ENCODE measurements at regions of chr10 and their contacts with region 1.

Region 1: DNA sequence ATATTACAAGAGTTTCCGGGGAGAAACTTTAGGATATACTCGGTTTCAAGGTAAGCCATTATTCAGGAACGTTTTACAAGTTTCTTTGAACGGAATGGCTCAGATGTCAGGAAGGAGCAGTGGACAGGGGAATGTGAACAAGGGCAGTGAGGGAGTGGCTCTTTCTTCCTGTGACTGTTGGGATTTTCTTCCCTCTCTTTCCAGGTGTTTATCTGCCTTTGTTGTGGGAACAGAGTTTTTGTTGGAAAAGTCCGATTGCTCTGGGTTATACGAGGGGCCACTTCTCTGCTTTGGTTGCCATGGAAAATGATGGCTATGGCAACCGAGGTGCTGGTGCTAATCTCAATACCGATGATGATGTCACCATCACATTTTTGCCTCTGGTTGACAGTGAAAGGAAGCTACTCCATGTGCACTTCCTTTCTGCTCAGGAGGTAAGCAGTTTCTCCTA is 41.4 kb downstream of the ZRANB1 start:
- H3K4me3 Mint-ChIP-seq: no peak overlapping the region
- H3K27ac Mint-ChIP-seq: peak overlapping the region; percentile 31
- H3K4me1 Mint-ChIP-seq: peaks cover 22% of the 10 kb centered on the region
- H3K27me3 Mint-ChIP-seq: no peaks in the 10 kb centered on the region

Region 2: GRCh38 chr10:124935946-124936345 is 47.3 kb before region 1 on chr10:
- intact Hi-C with region 1: loop called (anchors 10 kb)
- H3K4me3 Mint-ChIP-seq: no peak overlapping the region
- H3K27ac Mint-ChIP-seq: no peak overlapping the region
- H3K4me1 Mint-ChIP-seq: peaks cover 18% of the 10 kb centered on the region
- H3K27me3 Mint-ChIP-seq: no peaks in the 10 kb centered on the region

Region 3: DNA sequence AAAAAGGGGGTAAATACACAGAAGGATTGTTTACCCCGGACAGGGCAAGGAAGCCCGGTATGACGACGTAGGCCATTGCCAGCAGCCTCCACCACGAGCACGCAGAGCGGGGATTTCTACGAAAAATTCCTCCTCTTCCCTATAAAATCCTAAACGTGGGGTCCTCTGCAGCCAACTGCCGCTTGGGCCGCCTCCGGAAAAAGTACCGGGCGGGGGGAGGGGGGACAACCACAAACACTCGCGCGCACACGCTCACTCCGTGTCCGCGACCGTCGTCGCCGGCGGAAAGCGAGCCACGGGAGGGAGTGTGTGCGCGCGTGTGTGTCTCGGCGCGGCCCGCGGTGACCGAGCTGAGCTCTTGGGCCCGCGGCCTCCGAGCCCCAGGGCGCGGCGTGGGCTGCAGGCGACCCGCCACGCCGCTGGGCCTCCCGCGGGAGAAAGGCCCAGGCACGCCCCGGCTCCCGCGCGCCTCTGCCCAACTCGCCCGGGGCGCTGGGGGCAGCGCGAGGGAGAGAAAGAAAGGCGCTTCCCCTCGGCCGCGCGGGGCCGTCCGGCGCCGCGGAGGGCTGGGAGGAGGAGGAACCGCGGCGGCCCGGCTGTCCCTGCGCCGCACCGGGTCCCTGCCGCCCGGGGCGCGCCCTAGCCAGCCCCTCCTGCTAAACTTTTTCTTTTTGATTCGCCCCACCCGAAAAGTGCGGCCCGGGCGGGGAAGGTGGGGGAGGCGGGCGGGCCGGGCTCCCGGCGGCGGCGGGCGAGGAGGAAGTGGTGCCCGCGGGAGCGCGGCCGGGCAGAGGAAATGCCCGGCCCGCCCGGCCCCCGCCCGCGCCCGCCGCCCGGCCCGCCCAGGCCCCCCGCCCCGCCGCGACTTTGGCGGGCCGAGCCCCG is 175.6 kb after region 1 on chr10:
- intact Hi-C with region 1: no loop called
- H3K4me3 Mint-ChIP-seq: peak overlapping the region; percentile 87
- H3K27ac Mint-ChIP-seq: peak overlapping the region; percentile 89
- H3K4me1 Mint-ChIP-seq: peaks cover 36% of the 10 kb centered on the region
- H3K27me3 Mint-ChIP-seq: peaks cover 13% of the 10 kb centered on the region

Region 4: GRCh38 chr10:125734823-125735222 is 751.5 kb after region 1 on chr10:
- intact Hi-C with region 1: loop called (anchors 10 kb)
- H3K4me3 Mint-ChIP-seq: no peak overlapping the region
- H3K27ac Mint-ChIP-seq: no peak overlapping the region
- H3K4me1 Mint-ChIP-seq: no peaks in the 10 kb centered on the region
- H3K27me3 Mint-ChIP-seq: no peaks in the 10 kb centered on the region

Measured in dendritic cell treated with granulocyte-macrophage colony-stimulating factor and Interleukin-4, amounts not matched to agents 40 ng/mL and 50 ng/mL, for 4 days (primary cell).